Naive thymus-derived CD4-positive, alpha-beta T cell (primary cell): ENCODE measurements at regions of chr9 and their contacts with region 1.

Region 1: GRCh38 chr9:124940693-124941453 is at the start of gene GOLGA1:
- DNase-seq: peak; percentile 90 to 96 (median 94)
- ATAC-seq: peak; percentile 93
- H3K4me3 ChIP-seq: peak within 1 kb of the TSS; percentile 90
- H3K4me3 Mint-ChIP-seq: peak within 1 kb of the TSS; percentile 80 to 99 (median 92)
- H3K27ac ChIP-seq: peak within 1 kb of the TSS; percentile 95
- H3K27ac Mint-ChIP-seq: peak within 1 kb of the TSS; percentile 91 to 100 (median 98)
- H3K4me1 ChIP-seq: peaks cover 8% of the 10 kb centered on the region in 2 donors
- H3K4me1 Mint-ChIP-seq: peaks cover 16 to 44% (median 35%) of the 10 kb centered on the region in 7 donors
- H3K27me3 ChIP-seq: no peaks in the 10 kb centered on the region
- H3K27me3 Mint-ChIP-seq: no peaks in the 10 kb centered on the region
- total RNA-seq, gene GOLGA1: 19.6 to 37.8 (median 30.5) TPM

Region 2: GRCh38 chr9:124415102-124415851 is 525.6 kb before region 1 on chr9 and contains the start of gene PSMB7:
- CTCF ChIA-PET with region 1: no interaction called
- POLR2A ChIA-PET with region 1: no interaction called
- intact Hi-C with region 1: loop called in 1 of 2 experiments (anchors 5 kb)
- DNase-seq: peak; percentile 91 to 97 (median 96)
- ATAC-seq: peak; percentile 99
- H3K4me3 ChIP-seq: peak within 1 kb of the TSS; percentile 75
- H3K4me3 Mint-ChIP-seq: peak within 1 kb of the TSS; percentile 93 to 99 (median 97)
- H3K27ac ChIP-seq: peak within 1 kb of the TSS; percentile 78
- H3K27ac Mint-ChIP-seq: peak within 1 kb of the TSS; percentile 82 to 98 (median 94)
- H3K4me1 ChIP-seq: peaks cover 13 to 18% of the 10 kb centered on the region in 2 donors
- H3K4me1 Mint-ChIP-seq: peaks cover 16 to 46% (median 39%) of the 10 kb centered on the region in 7 donors
- H3K27me3 ChIP-seq: no peaks in the 10 kb centered on the region
- H3K27me3 Mint-ChIP-seq: no peaks in the 10 kb centered on the region
- total RNA-seq, gene PSMB7: 59.4 to 129 (median 63.2) TPM

Region 3: DNA sequence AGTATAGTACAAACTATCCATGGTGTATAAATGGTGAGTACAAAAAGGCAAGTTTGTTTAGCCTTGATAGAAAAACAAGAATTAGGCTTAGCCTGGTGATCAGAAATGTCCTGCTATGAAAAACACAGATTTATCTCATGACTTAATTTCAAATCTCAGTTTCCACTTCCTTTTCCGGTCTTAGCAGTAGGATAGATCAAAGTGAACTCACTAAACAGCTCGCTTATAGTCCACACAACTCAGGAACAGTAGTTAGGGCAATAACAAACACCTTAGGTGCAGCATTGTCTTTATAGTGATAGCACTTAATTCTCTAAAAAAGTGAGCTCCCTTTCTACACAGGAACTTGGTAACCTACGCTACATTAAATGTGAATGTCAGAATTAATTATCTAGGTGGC is 11.4 kb before region 1 on chr9:
- CTCF ChIA-PET with region 1: interaction called, 6 read pairs
- POLR2A ChIA-PET with region 1: interaction called, 10 read pairs
- intact Hi-C with region 1: no loop called
- DNase-seq: no peak
- ATAC-seq: no peak
- H3K4me3 ChIP-seq: no peak overlapping the region
- H3K4me3 Mint-ChIP-seq: peak overlapping the region in 1 of 10 donors; percentile 21
- H3K27ac ChIP-seq: no peak overlapping the region
- H3K27ac Mint-ChIP-seq: no peak overlapping the region
- H3K4me1 ChIP-seq: no peaks in the 10 kb centered on the region
- H3K4me1 Mint-ChIP-seq: peaks cover 0 to 13% (median 0%) of the 10 kb centered on the region in 7 donors
- H3K27me3 ChIP-seq: no peaks in the 10 kb centered on the region
- H3K27me3 Mint-ChIP-seq: no peaks in the 10 kb centered on the region

Region 4: DNA sequence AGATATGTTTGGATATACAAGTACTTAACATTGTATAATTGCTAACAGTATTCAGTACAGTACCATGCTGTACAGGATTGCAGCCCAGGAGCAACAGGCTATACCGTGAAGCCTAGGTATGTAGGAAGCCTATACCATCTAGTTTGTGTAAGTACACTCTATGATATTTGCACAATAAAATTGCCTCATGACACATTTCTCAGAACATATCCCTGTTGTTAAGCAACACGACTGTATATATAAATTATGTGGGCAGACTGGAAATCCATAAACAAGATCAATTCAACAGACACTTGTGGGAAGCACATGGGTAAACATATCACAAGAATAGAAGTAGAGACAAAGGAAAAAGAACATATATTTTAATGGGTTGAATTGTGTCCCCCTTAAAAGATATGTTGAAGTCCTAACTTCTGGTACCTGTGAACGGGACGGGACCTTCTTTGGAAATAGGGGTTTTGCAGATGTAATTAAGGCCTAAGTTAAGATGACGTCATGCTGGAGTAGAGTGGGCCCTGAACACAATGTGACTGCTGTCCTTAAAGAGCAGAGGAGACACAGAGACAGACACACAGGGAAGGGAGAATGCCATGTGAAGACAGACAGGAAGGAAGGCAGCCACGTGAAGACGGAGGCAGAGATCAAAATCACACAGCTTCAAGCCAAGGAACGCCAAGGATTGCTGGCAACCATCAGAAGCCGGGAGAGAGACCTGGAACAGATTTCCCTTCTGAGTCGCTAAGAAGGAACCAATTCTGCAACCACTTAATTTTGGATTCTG is 126.2 kb after region 1 on chr9:
- CTCF ChIA-PET with region 1: no interaction called
- POLR2A ChIA-PET with region 1: no interaction called
- intact Hi-C with region 1: no loop called
- DNase-seq: no peak
- ATAC-seq: no peak
- H3K4me3 ChIP-seq: no peak overlapping the region
- H3K4me3 Mint-ChIP-seq: no peak overlapping the region
- H3K27ac ChIP-seq: no peak overlapping the region
- H3K27ac Mint-ChIP-seq: peak overlapping the region in 7 of 9 donors; percentile 16 to 67 (median 29)
- H3K4me1 ChIP-seq: no peaks in the 10 kb centered on the region
- H3K4me1 Mint-ChIP-seq: peaks cover 0 to 17% (median 13%) of the 10 kb centered on the region in 7 donors
- H3K27me3 ChIP-seq: no peaks in the 10 kb centered on the region
- H3K27me3 Mint-ChIP-seq: no peaks in the 10 kb centered on the region

Region 5: GRCh38 chr9:125126019-125126746 is 185.3 kb after region 1 on chr9:
- CTCF ChIA-PET with region 1: no interaction called
- POLR2A ChIA-PET with region 1: interaction called, 7 read pairs
- intact Hi-C with region 1: loop called (anchors 5 kb)
- DNase-seq: peak; percentile 55 to 93 (median 88)
- ATAC-seq: peak; percentile 100
- H3K4me3 ChIP-seq: no peak overlapping the region
- H3K4me3 Mint-ChIP-seq: peak overlapping the region; percentile 67 to 87 (median 82)
- H3K27ac ChIP-seq: peak overlapping the region; percentile 27
- H3K27ac Mint-ChIP-seq: peak overlapping the region; percentile 84 to 98 (median 96)
- H3K4me1 ChIP-seq: peaks cover 18 to 36% of the 10 kb centered on the region in 2 donors
- H3K4me1 Mint-ChIP-seq: peaks cover 29 to 57% (median 38%) of the 10 kb centered on the region in 7 donors
- H3K27me3 ChIP-seq: no peaks in the 10 kb centered on the region
- H3K27me3 Mint-ChIP-seq: no peaks in the 10 kb centered on the region

Region 6: DNA sequence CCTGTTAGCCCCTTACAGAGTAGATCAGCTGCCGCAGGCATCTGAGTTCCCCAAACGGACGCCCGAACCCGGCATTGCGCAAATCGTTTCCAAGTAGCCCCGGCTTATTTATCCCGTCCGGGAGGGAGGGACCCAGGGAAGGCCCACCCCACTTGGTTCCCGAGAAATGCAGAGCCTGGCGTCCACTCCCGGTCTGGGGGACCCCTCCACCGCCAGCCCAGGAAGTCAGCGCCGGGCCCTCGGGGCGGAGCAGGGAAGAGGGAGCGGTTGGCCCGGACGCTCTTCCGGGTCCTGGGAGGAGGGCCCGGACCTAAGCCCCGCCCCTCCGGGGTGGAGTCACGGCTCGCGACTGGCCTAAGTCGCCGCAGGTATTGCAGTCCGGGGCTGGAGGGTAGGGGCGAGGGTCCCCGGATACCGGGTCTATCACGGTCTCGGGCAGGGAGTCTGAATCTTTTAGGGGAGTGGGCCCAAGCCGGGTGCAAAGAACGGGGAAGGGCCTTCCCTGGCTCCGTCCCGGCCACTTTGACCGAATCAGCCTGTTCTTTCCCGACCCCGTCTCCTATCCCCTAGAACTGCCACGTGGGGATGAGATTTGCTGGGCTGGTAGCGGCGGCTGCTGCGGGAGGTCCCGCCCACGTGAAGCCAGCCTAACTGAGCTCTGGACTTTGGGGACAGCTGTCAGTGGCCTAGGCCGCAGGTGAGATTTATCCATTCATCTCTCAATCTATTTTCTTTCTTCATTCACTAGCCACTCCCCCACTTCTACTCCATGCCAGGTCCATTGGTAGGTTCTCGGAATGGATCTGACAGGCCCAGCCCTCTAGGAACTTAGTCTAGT is 259.6 kb after region 1 on chr9 and contains the start of gene RABEPK:
- CTCF ChIA-PET with region 1: no interaction called
- POLR2A ChIA-PET with region 1: interaction called, 5 read pairs
- intact Hi-C with region 1: loop called in 1 of 2 experiments (anchors 1 kb)
- DNase-seq: peak; percentile 76 to 97 (median 83)
- ATAC-seq: peak; percentile 99
- H3K4me3 ChIP-seq: peak within 1 kb of the TSS; percentile 90
- H3K4me3 Mint-ChIP-seq: peak within 1 kb of the TSS; percentile 80 to 96 (median 93)
- H3K27ac ChIP-seq: peak within 1 kb of the TSS; percentile 89
- H3K27ac Mint-ChIP-seq: peak within 1 kb of the TSS; percentile 80 to 96 (median 92)
- H3K4me1 ChIP-seq: peaks cover 20 to 34% of the 10 kb centered on the region in 2 donors
- H3K4me1 Mint-ChIP-seq: peaks cover 24 to 74% (median 56%) of the 10 kb centered on the region in 7 donors
- H3K27me3 ChIP-seq: no peaks in the 10 kb centered on the region
- H3K27me3 Mint-ChIP-seq: peaks cover 0 to 10% (median 0%) of the 10 kb centered on the region in 5 donors
- total RNA-seq, gene RABEPK: 10.7 to 19.5 (median 15.1) TPM

Region 7: GRCh38 chr9:125746017-125746773 is 805.3 kb after region 1 on chr9:
- CTCF ChIA-PET with region 1: no interaction called
- POLR2A ChIA-PET with region 1: no interaction called
- intact Hi-C with region 1: loop called in 1 of 2 experiments (anchors 5 kb)
- DNase-seq: peak; percentile 86 to 96 (median 89)
- ATAC-seq: peak; percentile 93
- H3K4me3 ChIP-seq: peak overlapping the region; percentile 87
- H3K4me3 Mint-ChIP-seq: peak overlapping the region; percentile 94 to 99 (median 94)
- H3K27ac ChIP-seq: peak overlapping the region; percentile 65
- H3K27ac Mint-ChIP-seq: peak overlapping the region; percentile 84 to 93 (median 90)
- H3K4me1 ChIP-seq: peaks cover 0 to 4% of the 10 kb centered on the region in 2 donors
- H3K4me1 Mint-ChIP-seq: peaks cover 9 to 41% (median 33%) of the 10 kb centered on the region in 7 donors
- H3K27me3 ChIP-seq: no peaks in the 10 kb centered on the region
- H3K27me3 Mint-ChIP-seq: peaks cover 0 to 41% (median 0%) of the 10 kb centered on the region in 5 donors